ENCODE measurements at regions of chr1 and their contacts with region 1.

Region 1: DNA sequence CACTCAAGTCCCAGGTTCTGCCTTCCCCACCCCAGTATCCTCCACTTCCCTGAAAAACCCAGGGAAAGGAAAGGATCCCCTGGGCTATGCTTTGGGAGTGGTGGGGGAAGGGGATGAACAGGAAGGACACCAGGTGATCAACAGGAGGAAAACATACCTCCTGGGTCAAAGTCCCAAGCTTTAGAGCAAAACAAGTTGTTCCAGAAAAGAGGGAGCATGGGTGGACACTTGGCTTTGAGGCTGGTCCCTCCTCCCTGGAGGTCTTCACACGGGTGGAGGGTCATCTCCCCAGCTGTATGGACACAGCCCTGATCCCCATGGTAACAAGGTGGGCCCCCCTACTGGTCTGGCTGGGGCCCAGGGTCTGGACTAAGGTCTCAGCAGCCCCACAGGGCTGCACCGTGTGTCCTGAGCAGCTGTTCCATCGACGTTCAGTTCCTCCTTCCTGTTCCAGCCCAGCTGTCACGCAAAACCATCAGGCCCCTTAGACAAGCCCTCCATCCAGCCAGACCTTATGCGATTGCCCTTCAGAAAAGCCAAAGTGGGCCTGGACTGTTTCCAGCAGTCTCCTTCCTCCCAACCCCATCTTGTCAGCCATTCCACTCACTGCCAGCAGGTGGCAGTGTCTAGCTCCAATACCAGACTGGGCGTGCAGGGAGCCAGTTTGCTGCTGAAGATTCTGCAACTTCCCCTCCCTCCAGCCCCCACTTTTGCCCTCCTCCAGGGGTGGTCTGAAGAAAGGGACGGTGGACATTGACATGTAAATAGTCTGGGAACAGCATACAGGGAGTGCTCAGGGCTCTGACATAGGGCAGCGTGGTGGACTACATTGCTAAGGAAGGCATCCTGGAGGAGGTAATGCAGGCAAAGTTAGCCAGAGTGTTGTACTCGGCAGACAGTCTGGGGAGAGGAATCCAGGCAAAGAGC is 2.9 kb upstream of the PDZK1IP1 start:
- DNase-seq: peak; percentile 50 to 60 (median 53)
- H3K4me3 ChIP-seq: no peak overlapping the region
- H3K4me3 Mint-ChIP-seq: no peak overlapping the region
- H3K27ac ChIP-seq: no peak overlapping the region
- H3K27ac Mint-ChIP-seq: peak overlapping the region in 1 of 7 donors; percentile 70
- H3K4me1 ChIP-seq: no peaks in the 10 kb centered on the region
- H3K4me1 Mint-ChIP-seq: peaks cover 6% of the 10 kb centered on the region
- H3K27me3 ChIP-seq: no peaks in the 10 kb centered on the region
- H3K27me3 Mint-ChIP-seq: peaks cover 0 to 9% (median 9%) of the 10 kb centered on the region in 3 donors
- CTCF ChIP-seq: peak; percentile 91

Region 2: DNA sequence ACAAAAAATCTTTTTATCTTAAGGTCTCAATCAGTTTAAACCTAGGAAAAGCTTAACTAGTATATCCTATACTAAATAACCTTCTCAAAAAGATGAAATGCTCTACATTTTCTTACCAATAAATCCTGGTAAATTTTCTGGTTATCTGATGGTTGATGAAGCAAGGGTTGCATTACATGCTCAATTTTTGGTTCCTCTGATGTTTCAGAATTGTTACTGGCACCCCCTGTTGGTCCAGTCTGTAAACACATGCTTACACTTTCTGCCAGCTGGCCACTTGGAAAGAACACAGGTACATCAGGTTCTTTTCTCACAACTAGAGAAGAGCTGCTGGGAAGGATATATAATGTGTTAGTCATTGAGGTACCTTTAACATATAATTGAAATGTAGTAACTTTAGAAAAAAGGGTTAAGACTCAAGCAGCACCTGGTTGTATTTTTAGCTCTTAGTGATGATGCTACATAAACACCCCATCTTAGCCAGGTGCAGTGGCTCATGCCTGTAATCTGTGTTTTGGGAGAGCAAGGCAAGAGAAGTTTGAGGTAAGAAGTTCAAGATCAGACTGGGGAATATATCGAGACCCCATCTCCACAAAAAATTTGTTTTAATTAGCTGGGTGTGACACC is 70.2 kb after region 1 on chr1:
- intact Hi-C with region 1: loop called (anchors 2 to 5 kb)
- DNase-seq: peak; percentile 12 to 30 (median 17)
- H3K4me3 ChIP-seq: no peak overlapping the region
- H3K4me3 Mint-ChIP-seq: no peak overlapping the region
- H3K27ac ChIP-seq: no peak overlapping the region
- H3K27ac Mint-ChIP-seq: no peak overlapping the region
- H3K4me1 ChIP-seq: no peaks in the 10 kb centered on the region
- H3K4me1 Mint-ChIP-seq: no peaks in the 10 kb centered on the region
- H3K27me3 ChIP-seq: no peaks in the 10 kb centered on the region
- H3K27me3 Mint-ChIP-seq: no peaks in the 10 kb centered on the region
- CTCF ChIP-seq: peak; percentile 83

Region 3: DNA sequence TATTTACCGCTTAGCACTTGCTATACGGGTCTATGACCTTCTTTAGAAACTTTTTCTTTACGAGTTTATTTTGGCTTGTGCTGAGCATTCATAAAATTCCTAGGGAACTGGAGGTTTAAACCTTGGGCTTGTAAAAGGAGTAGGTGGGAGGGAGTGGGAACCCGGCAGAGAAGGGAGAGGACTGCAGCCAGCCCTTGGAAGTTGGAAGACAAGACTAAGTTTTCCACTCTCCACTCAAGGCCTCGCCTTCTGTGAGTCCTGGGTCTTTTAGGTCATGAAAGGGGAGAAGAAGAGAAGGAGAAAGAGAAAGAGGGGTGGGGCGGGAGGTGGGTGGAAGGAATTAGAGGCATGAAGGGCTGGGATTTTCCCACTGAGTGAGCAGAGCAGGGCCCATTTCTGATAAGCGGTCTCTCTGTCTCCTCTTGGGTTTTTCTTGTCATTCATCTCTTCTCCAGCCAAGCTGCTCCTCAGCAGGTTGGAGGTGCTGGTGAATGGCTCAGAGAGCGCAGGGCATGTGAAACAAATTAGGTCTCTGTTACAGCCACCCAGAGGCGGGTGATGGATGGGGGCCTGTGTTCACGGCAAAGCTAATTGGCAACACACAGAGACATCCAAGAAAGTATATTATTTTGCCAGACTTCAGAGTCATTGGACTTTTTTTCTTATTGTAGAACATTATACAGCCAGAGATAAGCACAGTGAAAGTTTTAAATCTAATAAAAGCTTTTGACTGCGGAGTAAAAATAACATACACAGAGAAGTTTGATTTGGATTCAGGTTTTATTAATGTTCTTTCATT is 492.4 kb after region 1 on chr1:
- intact Hi-C with region 1: no loop called
- DNase-seq: no peak
- H3K4me3 ChIP-seq: no peak overlapping the region
- H3K4me3 Mint-ChIP-seq: no peak overlapping the region
- H3K27ac ChIP-seq: no peak overlapping the region
- H3K27ac Mint-ChIP-seq: no peak overlapping the region
- H3K4me1 ChIP-seq: no peaks in the 10 kb centered on the region
- H3K4me1 Mint-ChIP-seq: no peaks in the 10 kb centered on the region
- H3K27me3 ChIP-seq: no peaks in the 10 kb centered on the region
- H3K27me3 Mint-ChIP-seq: peaks cover 5 to 14% (median 13%) of the 10 kb centered on the region in 3 donors
- CTCF ChIP-seq: no peak

Measured in CD14-positive monocyte (primary cell).